Activated T-helper 1 cell treated with anti-CD3 and anti-CD28 coated beads, Interleukin-12 subunit alpha, Interleukin-12 subunit beta, Interleukin-2, Interleukin-4 antibody, amounts not matched to agents 30 ng/mL and 10 ng/mL and 1 ng/mL, durations not matched to agents 14 hours and 24 hours and 36 hours (primary cell): ENCODE measurements at regions of chr3 and their contacts with region 1.

Region 1: DNA sequence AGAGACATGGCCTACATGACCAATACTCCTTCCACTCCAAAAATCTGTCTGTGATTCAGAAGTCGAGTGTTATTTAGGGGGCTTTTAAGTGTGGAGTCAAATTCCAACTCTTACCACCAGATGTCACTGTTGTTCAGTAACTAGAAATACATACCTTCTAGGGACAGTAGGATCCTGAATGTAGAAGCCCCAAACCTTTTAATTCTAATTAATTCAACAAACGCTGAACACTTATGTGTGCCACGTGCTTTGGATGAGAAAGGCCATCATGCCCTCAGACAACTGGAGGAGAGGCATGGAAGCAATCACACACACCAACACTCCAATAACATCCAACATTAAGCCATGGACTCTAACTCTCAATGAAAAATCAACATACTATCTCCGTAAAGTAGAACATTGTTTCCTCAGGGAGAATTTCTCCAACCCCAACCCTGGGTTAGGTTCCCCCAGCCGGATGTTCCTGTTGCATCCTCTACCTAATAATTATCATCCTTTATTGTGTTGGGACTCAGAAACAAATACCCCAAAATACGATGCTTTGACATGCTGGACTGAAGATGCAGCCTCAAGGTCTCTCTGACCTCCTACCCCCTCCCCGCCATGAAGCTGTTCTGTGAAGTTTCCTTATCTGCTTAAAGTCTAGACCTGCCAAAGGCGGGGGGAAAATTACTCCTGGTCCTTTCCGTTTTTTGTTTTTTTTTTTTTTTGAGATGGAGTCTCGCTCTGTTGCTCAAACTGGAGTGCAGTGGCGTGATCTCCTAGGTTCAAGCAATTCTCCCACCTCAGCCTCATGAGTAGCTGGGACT is 8.0 kb upstream of the CCDC13 start:
- DNase-seq: no peak
- H3K4me3 Mint-ChIP-seq: no peak overlapping the region
- H3K27ac Mint-ChIP-seq: no peak overlapping the region
- H3K4me1 Mint-ChIP-seq: peaks cover 6% of the 10 kb centered on the region
- H3K27me3 Mint-ChIP-seq: no peaks in the 10 kb centered on the region

Region 2: DNA sequence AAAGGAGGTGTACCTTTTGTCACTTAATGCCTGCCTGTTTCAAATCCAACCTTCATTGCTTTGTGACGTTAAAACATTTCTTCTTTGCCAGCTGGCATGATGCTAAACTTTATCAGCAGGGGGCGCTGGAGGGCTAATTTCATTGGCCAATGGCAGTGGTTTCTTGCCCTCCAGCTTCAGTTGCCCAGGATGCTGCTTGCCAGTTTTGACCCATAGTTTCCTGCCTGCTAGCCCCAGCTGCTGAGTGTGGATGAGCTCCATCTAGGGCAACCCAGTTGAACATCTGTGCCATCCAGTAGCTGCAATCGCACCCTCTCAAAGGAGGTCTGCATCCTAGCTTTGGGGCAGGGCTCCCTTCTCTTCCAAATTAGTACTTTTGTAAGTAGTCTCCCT is 50.2 kb after region 1 on chr3:
- intact Hi-C with region 1: loop called (anchors 2 kb)
- DNase-seq: peak; percentile 59
- H3K4me3 Mint-ChIP-seq: no peak overlapping the region
- H3K27ac Mint-ChIP-seq: no peak overlapping the region
- H3K4me1 Mint-ChIP-seq: peaks cover 9% of the 10 kb centered on the region
- H3K27me3 Mint-ChIP-seq: peaks cover 11% of the 10 kb centered on the region

Region 3: GRCh38 chr3:42839616-42840015 is 58.5 kb after region 1 on chr3:
- intact Hi-C with region 1: loop called (anchors 1 kb)
- DNase-seq: peak; percentile 5
- H3K4me3 Mint-ChIP-seq: no peak overlapping the region
- H3K27ac Mint-ChIP-seq: no peak overlapping the region
- H3K4me1 Mint-ChIP-seq: no peaks in the 10 kb centered on the region
- H3K27me3 Mint-ChIP-seq: peaks cover 2% of the 10 kb centered on the region